ENCODE measurements at regions of chr1 and their contacts with region 1.

Region 1: GRCh38 chr1:193730017-193730416 is 543.6 kb upstream of the B3GALT2 start:
- DNase-seq: no peak
- ATAC-seq: no peak
- H3K4me3 Mint-ChIP-seq: no peak overlapping the region
- H3K27ac Mint-ChIP-seq: no peak overlapping the region
- H3K4me1 Mint-ChIP-seq: no peaks in the 10 kb centered on the region
- H3K27me3 Mint-ChIP-seq: no peaks in the 10 kb centered on the region

Region 2: DNA sequence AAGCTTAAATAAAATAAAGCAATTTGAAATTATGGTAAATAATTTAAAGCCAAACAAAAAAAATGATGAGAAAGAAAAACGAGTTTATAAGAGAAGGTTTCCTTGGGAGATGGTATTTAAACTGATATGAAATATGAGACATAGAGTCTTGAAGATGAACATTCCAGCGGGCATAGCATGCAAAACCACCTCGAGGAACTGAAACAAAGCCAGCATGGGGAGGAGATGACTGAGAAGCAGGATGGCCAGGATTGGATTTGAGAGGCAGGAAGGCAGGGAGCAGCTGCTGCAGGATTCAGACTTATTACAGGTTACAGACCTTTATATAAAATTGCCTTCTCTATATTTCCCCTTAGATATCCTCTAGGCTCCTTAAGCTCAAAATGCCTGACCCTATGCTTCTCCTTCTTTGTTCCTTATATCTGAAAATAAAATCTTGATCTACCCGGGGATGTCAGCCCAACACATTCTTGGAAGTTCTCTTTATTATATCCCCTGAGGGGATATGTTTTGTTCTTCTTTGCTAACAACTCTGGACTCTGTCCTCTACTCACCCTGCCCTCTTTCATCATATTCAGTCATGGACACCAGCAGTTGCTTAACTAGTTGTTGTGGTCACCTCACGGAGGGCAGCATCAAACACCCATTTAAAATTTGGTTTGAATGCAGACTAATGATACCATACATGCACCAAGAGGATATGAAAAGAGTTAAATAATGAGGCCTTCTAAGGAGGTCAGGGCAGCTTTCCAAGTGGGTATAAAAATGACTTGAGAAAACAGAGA is 175.5 kb after region 1 on chr1:
- CTCF ChIA-PET with region 1: no interaction called
- POLR2A ChIA-PET with region 1: no interaction called
- intact Hi-C with region 1: loop called in 1 of 2 experiments (anchors 5 kb)
- DNase-seq: no peak
- ATAC-seq: no peak
- H3K4me3 Mint-ChIP-seq: no peak overlapping the region
- H3K27ac Mint-ChIP-seq: no peak overlapping the region
- H3K4me1 Mint-ChIP-seq: no peaks in the 10 kb centered on the region
- H3K27me3 Mint-ChIP-seq: no peaks in the 10 kb centered on the region

Measured in activated CD4-positive, alpha-beta T cell treated with anti-CD3 and anti-CD28 coated beads for 36 hours (primary cell).